Mammary epithelial cell (primary cell): ENCODE measurements at regions of chr14 and their contacts with region 1.

Region 1: GRCh38 chr14:72893636-72894321 is at the start of gene DPF3:
- DNase-seq: peak; percentile 95
- H3K4me3 ChIP-seq: peak within 1 kb of the TSS; percentile 68 to 99 (median 94)
- H3K27ac ChIP-seq: no peak within 1 kb of the TSS
- H3K4me1 ChIP-seq: peaks cover 19% of the 10 kb centered on the region
- H3K27me3 ChIP-seq: no peaks in the 10 kb centered on the region
- CTCF ChIP-seq: no peak
- total RNA-seq, gene DPF3: 1.8 to 1.9 TPM

Region 2: GRCh38 chr14:72617391-72618031 is 276.3 kb before region 1 on chr14:
- CTCF ChIA-PET with region 1: no interaction called
- dilution Hi-C with region 1: no loop called
- in situ Hi-C with region 1: no loop called
- intact Hi-C with region 1: loop called (anchors 5 kb)
- DNase-seq: peak; percentile 32
- H3K4me3 ChIP-seq: no peak overlapping the region
- H3K27ac ChIP-seq: peak overlapping the region; percentile 27
- H3K4me1 ChIP-seq: peaks cover 48% of the 10 kb centered on the region
- H3K27me3 ChIP-seq: no peaks in the 10 kb centered on the region
- CTCF ChIP-seq: no peak

Region 3: DNA sequence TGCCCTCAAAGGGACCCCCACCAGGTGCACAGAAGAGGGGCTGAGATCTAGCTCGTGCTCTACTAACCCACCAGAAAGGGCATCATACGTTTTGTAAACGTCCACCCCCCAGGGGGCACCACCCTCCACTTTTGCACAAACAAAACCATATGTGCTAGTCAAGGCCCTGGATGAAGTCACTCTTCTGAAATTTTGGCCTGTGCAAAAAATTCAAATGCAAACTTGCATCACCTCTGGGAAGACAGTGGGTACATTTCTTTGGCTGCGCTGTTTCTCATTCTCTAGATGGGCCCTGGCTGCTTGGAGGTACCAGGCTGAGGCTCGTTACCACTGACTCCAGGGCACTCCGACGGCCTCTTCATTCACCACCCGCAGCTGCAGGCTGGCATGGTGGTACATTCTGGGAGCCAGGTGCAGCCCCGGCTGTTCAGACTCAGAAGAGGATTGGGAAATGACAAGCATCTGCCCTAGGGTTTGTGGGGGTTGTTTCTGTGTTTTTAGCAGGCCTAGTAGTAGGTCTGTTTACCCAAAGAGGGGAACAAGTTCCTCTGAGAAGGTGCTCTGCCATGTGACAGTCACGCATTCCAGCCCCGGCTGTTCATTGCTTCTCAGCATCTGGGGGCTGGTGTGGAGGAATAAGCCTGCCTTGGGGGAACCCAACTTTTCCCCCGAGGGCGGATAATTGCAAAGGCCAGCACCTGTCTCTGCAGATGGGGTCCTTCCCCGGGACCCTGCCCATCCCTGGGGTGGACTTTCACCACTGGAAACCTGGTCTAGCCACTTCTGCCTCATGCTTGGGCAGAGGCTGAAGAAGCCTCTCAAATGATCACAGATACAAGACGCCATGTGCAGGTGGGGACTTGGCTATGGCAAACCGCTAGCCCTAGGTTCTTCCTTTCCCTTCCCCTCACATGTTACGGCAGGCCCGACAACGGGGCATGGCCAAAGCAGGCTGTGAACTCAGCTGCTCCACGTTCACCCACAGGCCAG is 147.5 kb before region 1 on chr14:
- CTCF ChIA-PET with region 1: no interaction called
- dilution Hi-C with region 1: no loop called
- in situ Hi-C with region 1: no loop called
- intact Hi-C with region 1: loop called (anchors 5 kb)
- DNase-seq: peak; percentile 37
- H3K4me3 ChIP-seq: no peak overlapping the region
- H3K27ac ChIP-seq: peak overlapping the region; percentile 44
- H3K4me1 ChIP-seq: peaks cover 20% of the 10 kb centered on the region
- H3K27me3 ChIP-seq: no peaks in the 10 kb centered on the region
- CTCF ChIP-seq: no peak

Region 4: DNA sequence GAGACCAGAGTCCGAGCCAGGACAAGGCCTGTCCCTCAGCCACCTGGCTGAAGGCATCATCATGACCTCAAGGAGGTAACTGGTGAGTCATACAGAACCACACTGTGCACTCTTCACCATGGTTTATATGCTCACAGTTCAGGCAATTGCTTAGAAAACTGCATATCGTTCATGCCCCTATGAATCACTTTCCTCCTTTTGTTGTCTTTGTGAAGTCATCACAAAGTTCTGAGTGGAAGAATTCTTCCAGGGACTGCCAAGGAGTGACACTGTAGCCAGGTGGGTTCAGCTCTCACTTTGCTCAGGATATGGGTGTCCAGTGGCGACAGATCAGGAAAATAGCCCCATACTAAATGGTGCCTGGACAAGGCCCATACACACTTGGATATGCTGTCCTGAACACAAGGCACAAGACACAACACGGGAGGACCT is 92.4 kb before region 1 on chr14:
- CTCF ChIA-PET with region 1: interaction called, 5 read pairs
- dilution Hi-C with region 1: no loop called
- in situ Hi-C with region 1: no loop called
- intact Hi-C with region 1: loop called (anchors 5 kb)
- DNase-seq: peak; percentile 97
- H3K4me3 ChIP-seq: no peak overlapping the region
- H3K27ac ChIP-seq: peak overlapping the region; percentile 78
- H3K4me1 ChIP-seq: peaks cover 19% of the 10 kb centered on the region
- H3K27me3 ChIP-seq: no peaks in the 10 kb centered on the region
- CTCF ChIP-seq: no peak

Region 5: DNA sequence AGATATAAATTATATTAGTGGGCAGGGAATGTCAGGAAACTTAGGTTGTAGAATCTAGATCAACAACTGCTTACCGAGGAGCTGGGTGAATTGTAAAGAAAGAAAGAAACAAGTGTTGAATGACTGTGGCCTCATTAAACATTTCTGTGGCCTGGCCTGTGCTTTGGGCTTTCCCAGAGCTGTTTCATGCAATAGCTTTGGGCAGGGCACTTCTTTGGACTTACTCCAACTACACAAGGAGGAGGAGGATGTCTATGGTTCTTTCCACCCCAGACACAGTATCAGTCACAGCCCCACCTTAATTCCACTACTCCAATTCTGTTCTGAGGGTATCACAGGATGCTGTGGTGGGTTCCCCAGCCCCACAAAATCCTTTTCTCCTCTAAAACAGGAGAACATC is 37.9 kb before region 1 on chr14:
- CTCF ChIA-PET with region 1: no interaction called
- dilution Hi-C with region 1: no loop called
- in situ Hi-C with region 1: no loop called
- intact Hi-C with region 1: no loop called
- DNase-seq: peak; percentile 88
- H3K4me3 ChIP-seq: no peak overlapping the region
- H3K27ac ChIP-seq: no peak overlapping the region
- H3K4me1 ChIP-seq: no peaks in the 10 kb centered on the region
- H3K27me3 ChIP-seq: no peaks in the 10 kb centered on the region
- CTCF ChIP-seq: no peak

Region 6: DNA sequence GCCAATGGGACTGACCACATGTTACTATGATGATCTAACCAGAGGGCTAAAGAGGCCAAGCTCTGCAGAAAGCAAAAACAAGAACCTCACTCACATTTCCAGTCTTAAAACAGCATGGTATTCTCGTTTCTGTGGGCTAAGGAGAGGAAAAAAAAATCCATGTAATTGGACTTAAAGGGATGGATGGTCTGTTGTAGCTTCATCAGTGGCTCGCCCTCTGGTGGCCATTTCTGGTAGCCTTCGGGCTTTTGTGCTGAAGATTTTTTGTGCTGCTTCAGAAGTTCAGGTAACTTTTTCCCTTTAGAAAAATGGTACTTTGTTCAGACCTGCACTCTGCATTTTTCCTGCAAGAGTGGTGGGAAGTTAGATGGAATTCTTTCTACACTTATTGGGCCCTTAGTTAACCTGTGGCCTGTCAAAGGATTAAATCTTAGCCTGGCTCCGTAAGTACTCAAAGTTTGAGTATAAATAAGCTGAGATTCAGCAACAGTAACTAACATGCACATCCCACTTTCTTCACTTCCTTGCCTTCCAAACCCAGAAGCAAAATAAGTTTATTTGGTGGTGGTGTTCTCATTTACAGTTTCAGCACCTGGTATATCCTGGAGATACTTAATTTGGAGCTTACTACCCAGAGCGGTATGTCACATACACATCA is 54.8 kb after region 1 on chr14:
- CTCF ChIA-PET with region 1: no interaction called
- dilution Hi-C with region 1: no loop called
- in situ Hi-C with region 1: no loop called
- intact Hi-C with region 1: loop called (anchors 2 kb)
- DNase-seq: peak; percentile 41
- H3K4me3 ChIP-seq: no peak overlapping the region
- H3K27ac ChIP-seq: no peak overlapping the region
- H3K4me1 ChIP-seq: no peaks in the 10 kb centered on the region
- H3K27me3 ChIP-seq: no peaks in the 10 kb centered on the region
- CTCF ChIP-seq: peak; percentile 84 to 92

Region 7: DNA sequence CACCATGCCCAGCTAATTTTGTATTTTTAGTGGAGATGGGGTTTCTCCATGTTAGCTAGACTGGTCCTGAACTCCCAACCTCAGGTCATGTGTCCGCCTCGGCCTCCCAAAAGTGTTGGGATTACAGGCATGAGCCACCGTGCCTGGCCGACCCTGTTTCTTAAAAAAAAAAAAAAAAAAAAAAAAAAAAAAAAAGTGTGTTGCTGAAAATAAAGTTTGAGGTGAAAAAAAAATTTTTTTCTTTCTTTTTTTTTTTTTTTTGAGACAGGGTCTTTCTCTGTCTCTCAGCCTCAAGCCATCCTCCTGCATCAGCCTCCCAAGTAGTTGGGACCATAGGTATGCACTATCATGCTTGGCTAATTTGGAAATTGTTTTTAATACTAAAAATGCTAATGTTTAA is 175.8 kb after region 1 on chr14:
- CTCF ChIA-PET with region 1: no interaction called
- dilution Hi-C with region 1: no loop called
- in situ Hi-C with region 1: no loop called
- intact Hi-C with region 1: no loop called
- DNase-seq: no peak
- H3K4me3 ChIP-seq: no peak overlapping the region
- H3K27ac ChIP-seq: no peak overlapping the region
- H3K4me1 ChIP-seq: no peaks in the 10 kb centered on the region
- H3K27me3 ChIP-seq: no peaks in the 10 kb centered on the region
- CTCF ChIP-seq: no peak